PC-9 (cell line): ENCODE measurements at regions of chr1 and their contacts with region 1.

Region 1: DNA sequence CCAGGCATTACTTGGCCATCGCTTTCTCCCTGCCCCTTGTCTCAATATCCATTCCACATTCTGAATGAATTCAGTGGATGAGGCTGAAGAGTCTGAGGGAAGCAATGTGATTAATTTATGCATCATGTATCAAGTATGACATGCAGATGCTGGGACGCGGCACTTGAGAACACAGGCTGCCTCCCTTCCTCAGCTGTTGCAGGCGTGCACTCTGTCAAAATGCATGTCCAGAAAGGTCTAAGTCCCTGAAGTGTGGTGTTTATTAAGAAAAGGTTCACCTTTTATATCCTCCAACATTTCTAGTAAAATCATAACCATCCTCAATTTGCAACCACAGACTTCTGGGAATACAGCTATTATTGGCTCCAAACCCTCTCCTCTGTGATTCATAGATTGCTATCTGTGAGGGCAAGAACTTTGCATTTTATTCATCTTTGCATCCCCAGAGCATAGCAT is 22.6 kb upstream of the RAB3GAP2 start:
- DNase-seq: no peak
- H3K4me3 ChIP-seq: no peak overlapping the region
- H3K27ac ChIP-seq: no peak overlapping the region
- H3K4me1 ChIP-seq: no peaks in the 10 kb centered on the region
- H3K27me3 ChIP-seq: no peaks in the 10 kb centered on the region
- CTCF ChIP-seq: no peak

Region 2: DNA sequence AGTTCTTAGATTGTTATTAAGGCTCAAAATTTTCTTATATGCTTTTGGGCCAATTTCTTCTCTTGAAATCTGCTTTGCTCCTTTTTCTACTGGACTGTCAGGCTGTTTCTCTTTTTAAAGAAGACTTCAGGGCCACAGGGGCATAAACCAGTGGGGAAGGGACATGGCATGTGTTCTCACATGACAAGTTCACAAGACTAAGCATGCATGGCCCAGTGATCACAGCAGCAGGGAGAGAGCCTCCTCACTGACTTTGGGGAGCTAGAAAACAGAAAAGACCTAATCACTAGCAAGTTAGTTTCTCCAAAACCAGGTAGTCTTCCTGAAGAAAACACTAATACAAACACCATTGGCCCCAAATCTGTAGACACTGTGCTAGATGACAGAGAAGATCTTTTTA is 87.5 kb before region 1 on chr1:
- CTCF ChIA-PET with region 1: no interaction called
- POLR2A ChIA-PET with region 1: no interaction called
- intact Hi-C with region 1: no loop called
- DNase-seq: no peak
- H3K4me3 ChIP-seq: no peak overlapping the region
- H3K27ac ChIP-seq: no peak overlapping the region
- H3K4me1 ChIP-seq: no peaks in the 10 kb centered on the region
- H3K27me3 ChIP-seq: no peaks in the 10 kb centered on the region
- CTCF ChIP-seq: no peak

Region 3: DNA sequence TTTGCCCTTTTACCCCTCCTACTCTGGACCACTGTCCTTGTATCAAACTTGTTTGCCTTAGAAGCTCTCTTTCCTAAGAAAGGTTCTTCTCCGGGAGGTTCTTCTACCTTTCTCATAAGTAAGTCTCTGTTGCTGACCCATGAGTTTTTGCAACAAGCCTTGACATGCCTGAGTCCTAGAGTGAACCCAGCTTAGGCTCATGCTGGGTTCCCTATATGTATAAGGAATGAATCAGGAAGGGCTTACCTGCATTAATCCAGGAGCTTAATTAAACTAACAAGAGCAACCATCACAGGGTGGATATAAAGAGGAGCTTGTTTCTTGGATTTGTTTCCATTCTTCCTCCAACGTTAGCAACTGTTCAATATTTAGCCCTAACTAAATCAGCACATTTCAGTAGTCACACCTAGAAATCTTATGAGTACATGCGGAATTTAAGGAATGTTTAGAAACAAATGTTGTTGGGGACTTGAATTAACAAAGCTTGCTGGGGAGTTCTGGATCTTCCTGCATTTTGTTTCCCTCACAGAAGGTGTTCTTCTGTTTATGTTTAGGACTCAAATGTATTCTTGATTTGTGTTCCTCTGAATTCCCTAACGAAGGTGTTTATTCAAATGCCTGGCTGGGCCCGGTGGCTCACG is 41.6 kb after region 1 on chr1:
- CTCF ChIA-PET with region 1: interaction called, 7 read pairs
- POLR2A ChIA-PET with region 1: interaction called, 3 read pairs
- intact Hi-C with region 1: loop called (anchors 1 kb)
- DNase-seq: no peak
- H3K4me3 ChIP-seq: no peak overlapping the region
- H3K27ac ChIP-seq: peak overlapping the region; percentile 49
- H3K4me1 ChIP-seq: peaks cover 33% of the 10 kb centered on the region
- H3K27me3 ChIP-seq: no peaks in the 10 kb centered on the region
- CTCF ChIP-seq: no peak

Region 4: GRCh38 chr1:220451541-220451940 is 156.7 kb after region 1 on chr1:
- CTCF ChIA-PET with region 1: interaction called, 14 read pairs
- POLR2A ChIA-PET with region 1: no interaction called
- intact Hi-C with region 1: no loop called
- DNase-seq: peak in 1 of 2 experiments; percentile 71
- H3K4me3 ChIP-seq: no peak overlapping the region
- H3K27ac ChIP-seq: no peak overlapping the region
- H3K4me1 ChIP-seq: peaks cover 14% of the 10 kb centered on the region
- H3K27me3 ChIP-seq: no peaks in the 10 kb centered on the region
- CTCF ChIP-seq: no peak

Region 5: DNA sequence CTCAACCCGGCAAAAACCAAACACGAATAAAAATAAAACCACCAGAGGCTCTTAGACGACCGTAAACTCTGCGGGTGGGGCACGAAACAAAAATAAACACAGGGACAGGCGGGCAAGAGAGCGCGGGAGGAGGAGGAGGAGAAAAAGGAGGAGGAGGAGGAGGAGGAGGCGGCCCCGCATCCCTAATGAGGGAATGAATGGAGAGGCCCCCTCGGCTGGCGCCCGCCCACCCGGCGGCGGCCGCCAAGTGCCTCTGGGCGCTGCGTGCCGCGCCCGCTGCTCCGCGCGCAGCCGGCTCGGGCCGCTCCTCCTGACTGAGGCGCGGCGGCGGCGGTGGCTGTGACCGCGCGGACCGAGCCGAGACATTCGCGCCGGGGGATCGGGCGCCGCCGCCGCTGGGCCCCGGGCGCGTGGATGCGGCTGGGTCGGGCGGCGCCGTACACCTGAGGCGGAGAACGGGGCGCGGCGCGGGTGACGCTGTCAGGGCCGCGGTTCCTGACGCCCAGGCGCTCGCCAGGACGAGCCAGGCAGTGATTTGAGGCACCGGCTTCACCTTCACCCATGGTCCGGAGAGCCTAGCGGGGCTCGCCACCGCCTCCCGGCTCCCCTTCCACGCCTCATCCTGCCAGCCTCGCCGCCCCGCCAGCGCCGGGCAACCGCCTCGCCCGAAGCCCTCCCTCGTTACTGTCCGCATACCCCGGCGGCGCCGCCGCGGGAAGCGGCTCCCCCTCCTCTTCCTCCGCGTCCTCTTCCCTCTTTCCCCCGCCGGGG is 233.2 kb after region 1 on chr1 and contains the start of gene MARK1:
- CTCF ChIA-PET with region 1: interaction called, 3 read pairs
- POLR2A ChIA-PET with region 1: no interaction called
- intact Hi-C with region 1: loop called (anchors 5 kb)
- DNase-seq: peak; percentile 38 to 64
- H3K4me3 ChIP-seq: peak within 1 kb of the TSS; percentile 97
- H3K27ac ChIP-seq: no peak within 1 kb of the TSS
- H3K4me1 ChIP-seq: peaks cover 28% of the 10 kb centered on the region
- H3K27me3 ChIP-seq: no peaks in the 10 kb centered on the region
- CTCF ChIP-seq: no peak
- total RNA-seq, gene MARK1: 0.93 and 1.9 TPM in 2 replicates

Region 6: GRCh38 chr1:220733090-220733601 is 438.3 kb after region 1 on chr1:
- CTCF ChIA-PET with region 1: interaction called, 13 read pairs
- POLR2A ChIA-PET with region 1: no interaction called
- intact Hi-C with region 1: loop called (anchors 1 kb)
- DNase-seq: peak; percentile 71 to 74
- H3K4me3 ChIP-seq: no peak overlapping the region
- H3K27ac ChIP-seq: no peak overlapping the region
- H3K4me1 ChIP-seq: peaks cover 20% of the 10 kb centered on the region
- H3K27me3 ChIP-seq: no peaks in the 10 kb centered on the region
- CTCF ChIP-seq: peak; percentile 89